ENCODE measurements at regions of chr3 and their contacts with region 1.

Region 1: GRCh38 chr3:9946112-9947024 is 5.8 kb downstream of the PRRT3 start:
- DNase-seq: peak; percentile 91
- H3K4me3 ChIP-seq: peak overlapping the region; percentile 39 to 58 (median 57)
- H3K27ac ChIP-seq: peak overlapping the region; percentile 74 to 94 (median 90)
- H3K4me1 ChIP-seq: peaks cover 3 to 22% (median 13%) of the 10 kb centered on the region in 4 donors
- H3K27me3 ChIP-seq: no peaks in the 10 kb centered on the region
- CTCF ChIP-seq: peak; percentile 41 to 83 (median 69)
- EP300 ChIP-seq: no peak
- POLR2A ChIP-seq: peak; percentile 64

Region 2: GRCh38 chr3:9582332-9582731 is 364.0 kb before region 1 on chr3:
- in situ Hi-C with region 1: no loop called
- intact Hi-C with region 1: no loop called
- DNase-seq: no peak
- H3K4me3 ChIP-seq: no peak overlapping the region
- H3K27ac ChIP-seq: no peak overlapping the region
- H3K4me1 ChIP-seq: no peaks in the 10 kb centered on the region
- H3K27me3 ChIP-seq: no peaks in the 10 kb centered on the region
- CTCF ChIP-seq: no peak
- EP300 ChIP-seq: no peak
- POLR2A ChIP-seq: no peak

Region 3: DNA sequence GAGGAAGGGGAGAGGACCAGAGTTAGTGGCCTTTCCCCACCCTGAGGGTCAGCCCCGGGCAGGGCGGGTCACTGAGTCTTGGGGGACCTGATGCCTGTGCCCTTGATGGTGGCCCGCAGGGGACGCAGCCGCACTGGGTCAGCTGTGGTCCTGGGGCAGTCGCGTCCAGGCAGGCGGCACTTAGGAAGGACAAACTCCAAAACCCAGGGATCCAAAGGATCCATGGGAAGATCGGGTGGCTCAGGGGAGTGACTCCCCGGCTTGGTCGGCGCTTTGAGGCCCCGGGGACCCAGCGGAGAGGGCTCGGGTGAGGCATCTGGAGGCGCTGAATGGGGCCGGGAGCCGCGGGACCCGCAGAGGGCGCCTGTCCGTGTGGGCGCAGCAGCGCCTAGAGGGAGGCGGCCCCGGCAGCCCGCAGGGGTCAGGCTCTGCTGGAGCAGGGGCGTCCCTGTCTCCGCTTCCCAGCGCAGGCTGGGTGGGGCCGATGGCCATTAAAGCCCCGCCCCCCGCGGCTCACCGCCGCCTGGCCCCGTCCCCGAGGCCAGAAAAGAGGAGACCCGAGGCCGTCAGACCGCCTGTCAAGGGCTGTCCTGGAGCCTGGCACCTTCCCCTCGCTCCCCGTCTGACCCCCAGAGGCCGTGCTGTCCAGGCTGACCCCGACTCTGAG is 83.8 kb before region 1 on chr3:
- in situ Hi-C with region 1: no loop called
- intact Hi-C with region 1: loop called (anchors 1 kb)
- DNase-seq: peak; percentile 71
- H3K4me3 ChIP-seq: peak overlapping the region; percentile 16 to 48 (median 28)
- H3K27ac ChIP-seq: peak overlapping the region; percentile 52 to 87 (median 82)
- H3K4me1 ChIP-seq: peaks cover 7 to 29% (median 10%) of the 10 kb centered on the region in 4 donors
- H3K27me3 ChIP-seq: no peaks in the 10 kb centered on the region
- CTCF ChIP-seq: peak; percentile 38 to 65 (median 51)
- EP300 ChIP-seq: no peak
- POLR2A ChIP-seq: no peak

Region 4: DNA sequence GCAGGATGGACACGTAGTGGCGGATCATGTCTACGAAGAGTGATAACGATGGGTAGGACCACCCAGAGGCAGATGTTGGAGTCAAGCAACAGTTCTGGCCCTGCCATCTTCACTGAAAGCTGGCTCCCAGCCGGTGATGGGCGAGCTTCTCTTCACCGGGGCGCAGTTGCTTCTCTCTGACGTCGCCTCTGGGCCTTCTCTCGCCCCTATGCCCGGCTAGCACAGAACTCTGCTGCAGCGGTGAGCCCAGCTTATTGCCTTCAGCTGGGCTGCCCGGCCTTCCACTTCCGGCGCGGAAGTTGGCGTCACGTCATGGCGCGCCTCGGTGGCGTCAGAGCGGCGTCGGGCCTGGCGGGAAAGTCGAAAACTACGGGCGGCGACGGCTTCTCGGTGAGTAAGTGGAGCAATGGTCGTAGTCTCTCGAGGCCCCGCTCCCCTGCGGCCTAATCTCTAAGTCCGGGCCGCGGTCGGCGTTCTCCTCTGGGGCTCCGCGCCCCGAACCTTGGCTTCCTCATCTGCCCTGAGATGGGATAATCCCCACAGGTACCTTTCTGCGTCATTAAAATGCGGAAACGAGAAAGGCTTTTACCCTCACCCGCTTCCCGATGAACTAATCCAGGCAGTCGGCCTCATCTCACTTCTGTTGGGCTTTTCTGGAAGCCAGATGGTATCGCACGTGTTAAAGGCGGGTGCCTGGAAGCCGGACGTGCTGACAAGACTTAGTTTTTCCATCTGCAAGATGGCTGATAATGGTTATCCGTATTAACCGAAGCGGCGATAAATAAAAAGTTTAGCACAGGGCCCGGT is 79.9 kb after region 1 on chr3 and contains the start of gene FANCD2:
- in situ Hi-C with region 1: no loop called
- intact Hi-C with region 1: loop called (anchors 10 kb)
- DNase-seq: peak; percentile 92
- H3K4me3 ChIP-seq: peak within 1 kb of the TSS; percentile 60 to 93 (median 74)
- H3K27ac ChIP-seq: peak within 1 kb of the TSS; percentile 72 to 89 (median 87)
- H3K4me1 ChIP-seq: peaks cover 13 to 30% (median 17%) of the 10 kb centered on the region in 4 donors
- H3K27me3 ChIP-seq: no peaks in the 10 kb centered on the region
- CTCF ChIP-seq: peak in 2 of 5 experiments; percentile 6 to 17
- EP300 ChIP-seq: no peak
- POLR2A ChIP-seq: peak; percentile 87
- total RNA-seq, gene FANCD2: 0.80 to 43.0 (median 4.9) TPM

Measured in transverse colon (tissue), 4 donors.